Common myeloid progenitor, CD34-positive (primary cell): ENCODE measurements at regions of chr1 and their contacts with region 1.

Region 1: DNA sequence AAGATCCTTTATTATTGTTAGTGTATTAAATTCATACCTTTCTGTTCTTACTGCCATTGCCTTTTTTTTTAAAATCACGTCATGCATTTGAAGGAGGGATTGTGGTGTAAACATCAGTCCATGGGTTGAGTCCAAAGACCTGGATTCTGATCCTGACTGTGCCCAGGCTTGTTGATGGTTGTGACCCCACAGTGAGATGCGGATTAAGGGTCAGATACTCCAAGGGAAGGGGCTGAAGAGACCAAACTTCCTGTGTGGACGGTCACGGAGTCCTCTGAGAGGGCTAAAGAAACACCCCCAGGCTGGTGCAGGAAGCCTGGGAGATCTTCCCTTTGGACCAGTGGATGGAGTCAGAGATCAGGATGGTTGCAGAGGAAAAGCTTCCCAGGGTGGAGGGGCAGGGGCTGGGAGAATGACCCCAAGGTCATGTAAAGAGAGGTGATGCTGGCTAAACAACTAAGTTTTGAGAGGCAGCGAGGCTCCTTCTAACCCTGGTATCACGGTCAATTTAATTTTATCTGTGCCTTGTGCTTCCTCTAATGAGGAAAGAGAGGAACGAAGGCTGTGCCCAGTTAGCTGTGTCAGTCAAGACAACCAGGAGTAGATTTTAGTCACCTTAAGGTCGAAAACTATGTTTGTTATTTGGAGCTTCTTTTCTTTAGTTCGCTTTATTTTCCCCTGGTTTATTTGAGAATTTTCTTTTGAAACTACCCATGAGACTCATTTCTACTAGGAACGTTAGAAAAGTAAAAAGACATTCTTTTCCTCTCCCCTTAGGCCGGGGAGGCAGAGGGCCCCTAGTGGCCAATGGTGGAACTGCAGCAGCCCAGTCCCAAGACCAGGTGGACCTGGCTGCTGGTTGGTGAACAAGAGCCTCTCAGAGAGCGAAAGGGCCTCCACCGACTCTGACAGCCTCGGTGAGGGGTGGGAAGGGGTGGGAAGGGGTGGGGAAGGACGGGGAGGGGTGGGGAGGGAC is 8.7 kb upstream of the GPR161 start:
- DNase-seq: peak; percentile 93 to 96 (median 94)
- H3K4me3 ChIP-seq: peak overlapping the region in 3 of 7 experiments; percentile 15 to 66 (median 64)
- H3K27ac ChIP-seq: peak overlapping the region in 1 of 2 experiments; percentile 52
- H3K4me1 ChIP-seq: peaks cover 0 to 14% (median 12%) of the 10 kb centered on the region in 4 experiments
- H3K27me3 ChIP-seq: no peaks in the 10 kb centered on the region

Region 2: DNA sequence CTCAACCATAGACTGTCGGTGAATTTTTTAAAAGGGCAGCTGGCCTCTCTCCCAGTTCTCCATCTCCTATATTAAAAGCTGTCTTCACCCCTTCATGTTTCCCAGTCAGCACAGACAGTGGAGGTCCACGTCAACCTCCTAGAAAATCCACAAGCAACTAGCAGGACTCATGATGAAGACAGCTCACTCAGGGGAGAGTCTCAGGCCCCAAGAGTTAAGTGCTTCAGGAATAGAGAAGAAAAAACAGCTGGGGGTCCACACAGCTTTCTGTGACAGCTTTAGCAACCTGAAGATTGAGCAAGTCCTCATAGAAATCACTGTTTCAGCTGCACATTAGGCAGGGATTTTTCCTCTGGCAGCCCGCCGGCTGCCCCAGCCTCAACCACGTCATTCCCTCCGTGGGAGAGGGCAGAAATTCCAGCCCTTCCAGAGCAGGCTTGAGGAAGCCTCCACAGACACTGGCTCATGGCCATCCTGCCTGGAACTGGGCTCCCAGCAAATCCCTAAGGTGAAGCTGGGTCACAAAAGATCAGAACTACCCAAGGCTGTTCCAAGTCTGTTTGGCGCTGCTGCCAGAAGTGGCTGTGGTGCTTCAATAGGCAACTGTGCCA is 24.0 kb before region 1 on chr1:
- CTCF ChIA-PET with region 1: no interaction called
- POLR2A ChIA-PET with region 1: no interaction called
- DNase-seq: no peak
- H3K4me3 ChIP-seq: no peak overlapping the region
- H3K27ac ChIP-seq: no peak overlapping the region
- H3K4me1 ChIP-seq: no peaks in the 10 kb centered on the region
- H3K27me3 ChIP-seq: peaks cover 0 to 2% (median 0%) of the 10 kb centered on the region in 5 experiments

Region 3: GRCh38 chr1:168161459-168161858 is 16.0 kb after region 1 on chr1:
- CTCF ChIA-PET with region 1: interaction called, 12 read pairs
- POLR2A ChIA-PET with region 1: no interaction called
- DNase-seq: peak in 1 of 3 donors; percentile 44
- H3K4me3 ChIP-seq: no peak overlapping the region
- H3K27ac ChIP-seq: no peak overlapping the region
- H3K4me1 ChIP-seq: no peaks in the 10 kb centered on the region
- H3K27me3 ChIP-seq: no peaks in the 10 kb centered on the region